ENCODE measurements at regions of chr3 and their contacts with region 1.

Region 1: DNA sequence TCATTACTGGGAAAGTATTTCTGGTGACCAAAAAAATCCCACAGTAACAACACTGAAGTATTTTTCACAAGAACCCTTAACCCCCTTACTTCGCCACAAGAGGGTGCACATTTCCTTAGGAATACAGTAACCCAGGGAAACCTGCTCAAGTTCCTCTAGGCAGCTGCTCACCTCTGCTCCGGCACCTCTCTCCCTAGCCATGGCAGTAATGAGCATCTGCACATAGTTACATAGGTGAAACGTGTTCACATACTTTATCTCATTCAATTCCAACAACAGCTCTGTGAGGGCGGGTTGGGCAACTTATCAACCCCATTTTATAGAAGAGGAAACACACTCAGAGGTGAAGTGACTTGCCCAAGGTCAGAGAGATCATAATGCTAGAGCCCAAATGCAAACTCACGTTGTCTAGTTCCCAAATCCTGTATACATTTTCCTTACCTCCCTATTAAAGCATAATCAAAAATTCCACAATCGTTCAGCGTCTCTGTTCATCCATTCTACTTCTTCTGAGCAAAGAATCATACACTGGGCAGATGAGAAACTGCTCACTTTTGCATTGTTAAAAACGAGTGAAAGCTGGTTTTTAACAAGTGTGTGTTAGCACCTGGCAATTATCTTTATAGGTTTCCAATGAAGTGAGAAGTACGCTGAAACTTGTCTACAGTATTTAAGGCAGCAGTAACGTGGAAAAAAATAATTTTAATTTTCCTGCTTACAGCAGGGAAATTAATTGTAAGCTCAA is 90.7 kb downstream of the IGF2BP2 start:
- DNase-seq: peak; percentile 83
- ATAC-seq: peak; percentile 96
- H3K4me3 ChIP-seq: no peak overlapping the region
- H3K27ac ChIP-seq: no peak overlapping the region
- H3K4me1 ChIP-seq: peaks cover 19 to 70% of the 10 kb centered on the region in 2 experiments
- H3K27me3 ChIP-seq: no peaks in the 10 kb centered on the region
- CTCF ChIP-seq: peak; percentile 70 to 78 (median 72)
- POLR2A ChIP-seq: no peak
- RAD21 ChIP-seq: peak; percentile 89

Region 2: DNA sequence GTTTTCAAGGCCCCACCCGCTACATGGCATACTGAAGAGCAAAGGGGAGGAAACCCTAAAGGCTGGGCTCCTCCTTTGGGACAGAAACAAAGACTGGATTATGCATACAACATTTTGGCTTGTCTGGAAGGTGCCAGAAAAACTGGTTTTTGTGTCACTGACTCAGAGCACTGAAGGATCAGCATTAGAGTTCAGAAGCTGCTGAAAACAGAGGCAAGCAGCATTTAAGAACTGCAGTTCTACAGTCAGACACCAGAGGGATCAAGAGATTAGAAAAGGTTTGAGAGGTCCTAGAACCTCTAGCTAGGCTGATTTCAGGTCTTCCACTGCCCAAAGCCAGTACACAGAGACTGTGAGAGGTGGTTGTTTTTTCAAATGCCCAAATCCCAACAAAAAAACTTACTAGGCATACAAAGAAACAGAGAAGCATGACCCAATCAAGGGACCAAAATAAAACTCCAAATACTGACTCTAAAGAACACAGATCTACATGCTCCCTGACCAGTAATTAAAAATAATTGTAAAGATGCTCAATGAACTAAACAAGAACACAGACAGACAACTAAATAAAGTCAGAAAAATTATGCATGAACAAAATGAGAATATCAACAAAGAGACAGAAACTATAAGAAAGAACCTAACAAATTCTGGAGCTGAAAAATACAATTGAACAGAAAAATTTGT is 56.9 kb before region 1 on chr3:
- CTCF ChIA-PET with region 1: interaction called, 9 read pairs
- POLR2A ChIA-PET with region 1: no interaction called
- RAD21 ChIA-PET with region 1: no interaction called
- intact Hi-C with region 1: loop called (anchors 5 kb)
- DNase-seq: peak; percentile 69
- ATAC-seq: peak; percentile 94
- H3K4me3 ChIP-seq: no peak overlapping the region
- H3K27ac ChIP-seq: no peak overlapping the region
- H3K4me1 ChIP-seq: peaks cover 0 to 5% of the 10 kb centered on the region in 2 experiments; a peak in 1 of 4 replicates
- H3K27me3 ChIP-seq: no peaks in the 10 kb centered on the region
- CTCF ChIP-seq: peak; percentile 62 to 78 (median 71); a peak in 5 of 6 replicates
- POLR2A ChIP-seq: no peak
- RAD21 ChIP-seq: peak; percentile 85